BJ (cell line): ENCODE measurements at regions of chr5 and their contacts with region 1.

Region 1: GRCh38 chr5:171920765-171921391 is 85.6 kb downstream of the FBXW11 start:
- DNase-seq: no peak
- H3K4me3 ChIP-seq: no peak overlapping the region
- H3K27me3 ChIP-seq: no peaks in the 10 kb centered on the region
- CTCF ChIP-seq: no peak

Region 2: DNA sequence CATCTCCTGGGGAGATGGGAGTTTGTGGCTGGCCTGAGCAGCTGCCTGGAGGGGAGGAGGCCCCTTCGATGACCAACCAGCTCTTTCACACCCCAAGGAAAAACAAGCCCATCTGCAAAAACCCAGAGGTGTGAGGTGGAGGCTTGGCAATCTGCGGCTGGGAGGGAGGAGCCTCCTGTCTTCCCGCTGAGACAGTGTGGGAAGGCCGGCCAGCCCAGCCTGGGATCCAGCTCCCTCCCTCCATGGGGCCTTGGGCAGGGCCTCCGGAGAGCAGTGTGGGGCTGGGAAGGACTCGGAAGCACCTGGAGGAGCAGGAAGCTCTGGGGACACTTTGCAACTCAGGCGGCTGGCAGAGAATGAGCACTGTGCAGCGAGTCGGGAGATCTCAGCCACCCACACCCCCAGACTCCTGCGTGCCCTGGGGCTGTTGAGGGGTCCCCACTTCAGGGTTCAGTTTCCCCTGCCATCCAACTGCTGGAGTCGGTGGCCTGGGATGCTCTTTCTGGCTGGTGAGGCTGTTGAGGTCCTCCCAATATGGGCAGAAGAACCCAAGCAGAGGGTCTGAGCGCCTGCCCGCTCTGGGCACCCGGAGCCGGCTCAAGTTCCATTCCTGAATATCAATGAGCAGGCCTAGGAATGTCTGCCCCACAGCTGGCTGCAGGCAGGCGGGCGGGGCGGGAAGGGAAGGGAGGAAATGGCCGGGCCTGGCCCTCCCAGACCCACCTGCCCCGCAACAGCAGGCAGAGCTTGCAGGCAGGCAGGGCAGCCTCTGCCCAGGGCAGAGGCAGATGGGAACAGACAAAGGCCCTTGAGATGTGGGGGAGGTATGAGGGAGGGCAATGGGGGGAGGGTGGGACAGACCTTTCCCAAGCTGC is 400.3 kb before region 1 on chr5:
- CTCF ChIA-PET with region 1: no interaction called
- POLR2A ChIA-PET with region 1: interaction called, 16 read pairs
- DNase-seq: peak; percentile 9
- H3K4me3 ChIP-seq: no peak overlapping the region
- H3K27me3 ChIP-seq: no peaks in the 10 kb centered on the region; the same call in 1 of the 2 replicates
- CTCF ChIP-seq: no peak

Region 3: GRCh38 chr5:172670005-172670434 is 749.1 kb after region 1 on chr5:
- CTCF ChIA-PET with region 1: no interaction called
- POLR2A ChIA-PET with region 1: no interaction called
- DNase-seq: no peak
- H3K4me3 ChIP-seq: no peak overlapping the region
- H3K27me3 ChIP-seq: no peaks in the 10 kb centered on the region
- CTCF ChIP-seq: no peak